Cardiac septum (tissue), 1 donor: ENCODE measurements at regions of chr17 and their contacts with region 1.

Region 1: DNA sequence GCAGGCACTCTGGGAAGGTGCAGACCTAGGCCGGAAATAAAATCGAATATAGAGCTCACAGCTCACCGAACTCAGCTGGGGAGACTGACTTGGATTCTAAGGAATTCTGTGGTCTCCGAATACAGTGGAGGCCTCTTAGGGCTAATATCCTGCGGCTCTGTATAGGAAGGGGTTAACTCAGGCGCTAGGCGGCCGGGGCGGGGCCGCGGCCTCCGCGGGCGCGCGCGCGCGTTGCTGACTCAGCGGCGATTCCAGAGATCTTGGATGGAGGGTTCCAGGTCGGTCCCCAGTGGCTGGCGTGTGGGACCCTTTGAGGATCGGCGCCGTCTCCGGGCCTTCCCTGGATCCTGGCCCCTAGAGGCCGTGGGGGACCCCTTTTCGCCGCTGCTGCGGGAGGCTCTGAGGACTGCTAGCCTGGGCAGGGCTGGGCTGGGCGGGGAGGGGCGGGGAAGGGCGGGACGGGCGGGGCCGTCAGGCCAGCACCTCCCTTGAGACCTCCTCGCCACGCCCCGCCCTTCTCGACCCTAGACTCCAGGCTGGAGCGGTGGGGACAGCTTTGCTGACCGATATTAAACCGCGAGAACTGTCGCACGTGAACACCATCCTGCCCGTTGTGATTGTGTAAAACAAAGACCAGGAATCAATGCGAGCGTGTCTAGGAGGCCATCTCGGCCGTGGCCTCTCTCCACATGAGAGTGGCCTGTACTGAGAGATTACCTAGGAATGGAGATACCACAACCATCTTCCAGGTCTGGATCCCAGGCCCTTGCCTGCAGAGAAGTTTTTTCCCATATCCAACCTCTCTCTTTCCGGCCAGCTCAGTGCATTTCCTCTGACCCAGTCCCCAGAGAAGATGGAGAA is 1.4 kb upstream of the PLEKHH3 start:
- DNase-seq: peak; percentile 91

Region 2: DNA sequence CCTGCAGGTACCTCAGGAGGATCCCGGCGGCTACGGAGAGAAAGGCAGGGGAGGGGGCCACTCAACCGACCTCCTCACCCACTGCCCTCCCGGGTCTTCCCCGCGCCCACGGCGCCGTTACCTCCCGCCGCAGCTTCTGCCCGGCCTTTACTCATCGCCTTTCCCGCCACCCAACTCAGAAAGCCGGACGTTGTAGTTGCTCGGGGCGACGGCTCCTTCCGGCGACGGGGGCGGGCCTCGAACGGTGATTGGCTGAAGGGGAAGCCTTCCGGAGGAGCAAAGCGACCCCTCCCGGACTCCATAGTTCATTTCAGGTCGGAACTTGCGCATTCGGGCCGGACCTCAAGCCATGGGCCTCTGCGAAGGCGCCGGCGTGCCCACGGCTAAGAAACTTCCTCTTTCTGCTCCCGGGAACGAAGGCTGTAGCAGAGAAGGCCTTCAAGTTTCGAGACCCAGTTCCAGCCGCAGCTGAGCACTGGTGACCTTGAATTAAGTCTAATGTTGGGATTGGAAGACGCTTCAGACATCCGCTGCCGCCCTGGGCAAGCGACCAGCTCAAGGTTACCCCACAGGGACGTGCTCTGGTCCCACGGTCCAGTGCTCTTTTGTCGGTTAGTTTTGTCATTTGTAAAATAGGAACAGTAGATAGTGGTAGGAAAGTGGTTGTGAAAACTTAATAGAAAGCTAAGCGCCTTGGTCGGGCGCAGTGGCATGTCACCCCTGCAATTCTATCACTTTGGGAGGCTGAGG is 100.4 kb before region 1 on chr17 and contains the start of gene PSMC3IP:
- intact Hi-C with region 1: loop called (anchors 1 kb)
- DNase-seq: peak; percentile 97
- total RNA-seq, gene PSMC3IP: 1.8 TPM

Region 3: GRCh38 chr17:42609182-42609813 is 68.9 kb before region 1 on chr17 and contains the starts of genes RETREG3 and TUBG1:
- intact Hi-C with region 1: loop called (anchors 2 kb)
- DNase-seq: peak; percentile 99
- total RNA-seq, gene RETREG3: 21.3 TPM
- total RNA-seq, gene TUBG1: 45.6 TPM

Region 4: DNA sequence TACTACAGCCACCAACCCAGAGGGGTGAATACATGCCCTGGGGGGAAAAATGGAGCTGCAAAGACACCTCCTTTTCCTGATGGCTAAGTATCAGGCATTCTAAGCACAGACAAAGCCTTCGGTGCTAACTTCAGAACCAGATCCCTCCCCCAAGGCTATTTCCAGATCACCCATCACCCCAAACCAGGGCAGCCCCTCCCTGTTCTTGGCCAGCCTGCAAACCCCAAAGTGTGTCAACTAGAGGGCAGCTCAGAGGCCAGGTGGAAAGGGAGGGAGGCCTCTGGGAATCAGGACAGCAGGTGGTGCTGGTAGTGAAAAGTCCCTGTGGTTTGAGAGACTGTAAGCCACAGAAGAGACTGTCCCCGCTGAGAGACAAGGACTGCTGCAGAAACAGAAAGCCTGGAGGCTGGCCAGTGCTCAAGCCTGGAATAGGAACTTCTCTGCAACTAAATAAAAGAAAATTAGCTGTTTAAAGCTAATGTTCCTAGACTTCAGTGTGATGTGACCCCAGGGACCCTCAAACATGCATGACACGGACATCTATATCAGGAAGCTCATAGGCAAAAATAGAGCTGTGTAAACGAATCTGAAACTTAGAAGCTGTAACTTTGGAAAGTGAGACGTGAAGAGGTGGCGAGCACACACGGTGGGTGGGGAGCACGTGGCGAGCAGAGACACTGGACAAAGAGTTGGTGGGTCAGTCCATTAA is 59.6 kb before region 1 on chr17:
- intact Hi-C with region 1: loop called (anchors 2 kb)
- DNase-seq: peak; percentile 76

Region 5: GRCh38 chr17:42659079-42659931 is 18.8 kb before region 1 on chr17 and contains the start of gene TUBG2:
- intact Hi-C with region 1: no loop called
- DNase-seq: peak; percentile 94
- total RNA-seq, gene TUBG2: 21.9 TPM

Region 6: GRCh38 chr17:42744806-42745617 is 66.9 kb after region 1 on chr17 and contains the start of gene EZH1:
- intact Hi-C with region 1: loop called (anchors 5 kb)
- DNase-seq: peak; percentile 95
- total RNA-seq, gene EZH1: 45.4 TPM

Region 7: DNA sequence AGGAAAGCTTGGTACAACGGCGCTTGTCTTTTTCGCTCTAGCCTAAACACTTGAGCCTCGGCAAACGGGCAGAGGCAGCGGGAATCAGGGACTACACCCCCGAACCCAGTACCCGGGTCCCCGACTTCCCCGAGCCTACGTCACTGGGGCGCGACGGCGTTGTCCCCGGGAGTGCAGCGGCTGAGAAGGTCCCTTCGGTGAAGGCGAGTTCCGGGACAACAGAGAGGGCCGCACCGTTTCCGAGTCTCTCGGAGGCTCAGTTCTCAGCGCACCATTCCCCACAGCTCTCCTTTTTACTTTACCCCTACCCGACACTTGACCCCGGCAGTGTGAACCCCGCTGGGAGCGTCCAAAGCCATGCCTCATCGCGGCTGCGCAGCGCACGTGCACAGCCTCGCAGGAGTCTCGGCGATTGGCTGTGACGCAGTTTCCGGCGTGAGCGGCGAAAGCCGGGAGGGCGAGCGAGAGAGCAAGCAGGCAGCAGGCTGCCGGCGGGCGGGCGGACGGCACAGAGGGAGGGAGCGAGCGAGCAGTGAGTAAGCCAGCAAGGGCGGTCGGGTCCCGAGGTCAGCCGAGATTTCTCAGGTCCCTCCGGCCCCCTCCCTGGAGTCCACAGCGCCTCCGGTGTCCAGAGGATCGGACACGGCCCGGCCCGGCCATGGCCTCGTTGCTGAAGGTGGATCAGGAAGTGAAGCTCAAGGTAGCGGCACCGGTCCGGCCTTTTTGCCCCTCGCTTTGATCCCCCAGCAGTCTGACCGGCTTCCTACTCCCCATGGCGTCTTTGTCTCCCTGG is 155.0 kb after region 1 on chr17 and contains the start of gene PSME3:
- intact Hi-C with region 1: no loop called
- DNase-seq: peak; percentile 96
- total RNA-seq, gene PSME3: 66.9 TPM